ENCODE measurements at regions of chr7 and their contacts with region 1.

Region 1: GRCh38 chr7:134632937-134633540 is 13.6 kb upstream of the BPGM start:
- DNase-seq: peak; percentile 34
- H3K4me3 ChIP-seq: no peak overlapping the region
- H3K27ac ChIP-seq: no peak overlapping the region
- H3K4me1 ChIP-seq: no peaks in the 10 kb centered on the region
- H3K27me3 ChIP-seq: no peaks in the 10 kb centered on the region
- CTCF ChIP-seq: peak; percentile 83
- EP300 ChIP-seq: no peak
- RAD21 ChIP-seq: peak; percentile 93

Region 2: GRCh38 chr7:134504660-134505164 is 128.3 kb before region 1 on chr7:
- CTCF ChIA-PET with region 1: no interaction called
- POLR2A ChIA-PET with region 1: no interaction called
- DNase-seq: no peak
- H3K4me3 ChIP-seq: no peak overlapping the region
- H3K27ac ChIP-seq: no peak overlapping the region
- H3K4me1 ChIP-seq: no peaks in the 10 kb centered on the region
- H3K27me3 ChIP-seq: peaks cover 5% of the 10 kb centered on the region; the same call in 1 of the 2 replicates
- CTCF ChIP-seq: no peak
- EP300 ChIP-seq: no peak
- RAD21 ChIP-seq: no peak

Region 3: GRCh38 chr7:134605973-134606923 is 26.8 kb before region 1 on chr7:
- CTCF ChIA-PET with region 1: interaction called, 15 read pairs
- POLR2A ChIA-PET with region 1: no interaction called
- DNase-seq: peak; percentile 66
- H3K4me3 ChIP-seq: peak overlapping the region in 1 of 2 experiments; percentile 16; a peak in 1 of 4 replicates
- H3K27ac ChIP-seq: no peak overlapping the region; a peak in 1 of 4 replicates
- H3K4me1 ChIP-seq: no peaks in the 10 kb centered on the region; a peak in 2 of 4 replicates
- H3K27me3 ChIP-seq: no peaks in the 10 kb centered on the region
- CTCF ChIP-seq: peak; percentile 100
- EP300 ChIP-seq: no peak
- RAD21 ChIP-seq: peak; percentile 92

Region 4: GRCh38 chr7:134619627-134620331 is 13.3 kb before region 1 on chr7:
- CTCF ChIA-PET with region 1: interaction called, 35 read pairs
- POLR2A ChIA-PET with region 1: no interaction called
- DNase-seq: no peak
- H3K4me3 ChIP-seq: no peak overlapping the region
- H3K27ac ChIP-seq: peak overlapping the region in 1 of 2 experiments; percentile 99; a peak in 2 of 4 replicates
- H3K4me1 ChIP-seq: peaks cover 0 to 27% of the 10 kb centered on the region in 2 experiments; a peak in 1 of 4 replicates
- H3K27me3 ChIP-seq: no peaks in the 10 kb centered on the region
- CTCF ChIP-seq: no peak
- EP300 ChIP-seq: peak in 1 of 2 experiments; percentile 48; a peak in 1 of 4 replicates
- RAD21 ChIP-seq: no peak

Region 5: GRCh38 chr7:134690016-134690415 is 57.0 kb after region 1 on chr7:
- CTCF ChIA-PET with region 1: interaction called, 13 read pairs
- POLR2A ChIA-PET with region 1: no interaction called
- DNase-seq: peak; percentile 50
- H3K4me3 ChIP-seq: no peak overlapping the region
- H3K27ac ChIP-seq: peak overlapping the region; percentile 82 to 88; a peak in 3 of 4 replicates
- H3K4me1 ChIP-seq: peaks cover 12 to 39% of the 10 kb centered on the region in 2 experiments
- H3K27me3 ChIP-seq: no peaks in the 10 kb centered on the region
- CTCF ChIP-seq: peak; percentile 95
- EP300 ChIP-seq: no peak
- RAD21 ChIP-seq: peak; percentile 88

Region 6: DNA sequence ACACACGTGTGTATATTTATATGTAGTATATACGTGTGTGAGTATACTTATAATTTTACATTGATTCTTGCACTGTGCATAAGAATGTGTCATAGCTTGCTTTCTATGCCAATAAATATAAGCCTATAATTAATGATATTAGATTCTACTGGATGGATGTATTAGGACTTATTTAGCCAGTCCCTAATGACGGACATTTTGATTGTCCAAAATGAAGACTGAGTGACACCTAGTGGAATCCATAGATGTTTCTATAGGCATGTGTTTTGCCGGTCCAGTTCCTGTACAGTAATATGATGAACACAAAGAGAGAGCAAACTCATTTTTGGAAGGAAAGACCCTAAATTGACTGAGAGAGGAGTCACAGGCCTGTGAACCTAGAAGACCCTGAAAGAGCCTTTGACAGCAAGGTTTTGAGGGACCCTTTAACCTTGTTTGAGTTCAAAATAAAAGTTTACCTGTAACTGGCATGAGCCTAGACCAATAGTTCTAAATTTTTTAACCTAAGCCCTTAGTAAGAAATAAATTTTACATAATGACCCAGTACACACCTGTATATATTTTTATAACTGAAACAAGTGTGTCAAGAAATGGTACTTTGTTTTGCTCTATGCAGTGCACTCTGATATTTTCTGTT is 310.8 kb after region 1 on chr7:
- CTCF ChIA-PET with region 1: interaction called, 66 read pairs
- POLR2A ChIA-PET with region 1: no interaction called
- DNase-seq: peak; percentile 74
- H3K4me3 ChIP-seq: no peak overlapping the region
- H3K27ac ChIP-seq: no peak overlapping the region; a peak in 1 of 4 replicates
- H3K4me1 ChIP-seq: peaks cover 7 to 12% of the 10 kb centered on the region in 2 experiments; a peak in 2 of 4 replicates
- H3K27me3 ChIP-seq: no peaks in the 10 kb centered on the region
- CTCF ChIP-seq: peak; percentile 65
- EP300 ChIP-seq: no peak
- RAD21 ChIP-seq: peak; percentile 94

Region 7: GRCh38 chr7:134959810-134960209 is 326.8 kb after region 1 on chr7:
- CTCF ChIA-PET with region 1: interaction called, 15 read pairs
- POLR2A ChIA-PET with region 1: no interaction called
- DNase-seq: no peak
- H3K4me3 ChIP-seq: no peak overlapping the region
- H3K27ac ChIP-seq: no peak overlapping the region
- H3K4me1 ChIP-seq: no peaks in the 10 kb centered on the region
- H3K27me3 ChIP-seq: no peaks in the 10 kb centered on the region
- CTCF ChIP-seq: no peak
- EP300 ChIP-seq: no peak
- RAD21 ChIP-seq: no peak

Measured in SK-N-SH (cell line).